HepG2 (cell line): ENCODE measurements at regions of chr4 and their contacts with region 1.

Region 1: GRCh38 chr4:13654158-13654797 is 26.8 kb upstream of the BOD1L1 start:
- DNase-seq: peak; percentile 32
- ATAC-seq: peak; percentile 98
- H3K4me3 ChIP-seq: peak overlapping the region; percentile 33 to 75 (median 47)
- H3K27ac ChIP-seq: no peak overlapping the region
- H3K4me1 ChIP-seq: no peaks in the 10 kb centered on the region
- H3K27me3 ChIP-seq: peaks cover 0 to 3% of the 10 kb centered on the region in 2 experiments; a peak in 2 of 5 replicates
- CTCF ChIP-seq: peak; percentile 74
- EP300 ChIP-seq: no peak
- POLR2A ChIP-seq: no peak
- RAD21 ChIP-seq: peak; percentile 46; the same call in 1 of the 2 replicates

Region 2: GRCh38 chr4:13207226-13207625 is 447.1 kb before region 1 on chr4:
- CTCF ChIA-PET with region 1: no interaction called
- POLR2A ChIA-PET with region 1: no interaction called
- in situ Hi-C with region 1: no loop called
- intact Hi-C with region 1: no loop called
- DNase-seq: no peak
- ATAC-seq: peak; percentile 40; the same call in 1 of the 3 replicates
- H3K4me3 ChIP-seq: no peak overlapping the region
- H3K27ac ChIP-seq: no peak overlapping the region
- H3K4me1 ChIP-seq: 0 out of 2 replicates have a peak, but pooled peaks cover 6% of the 10 kb centered on the region
- H3K27me3 ChIP-seq: no peaks in the 10 kb centered on the region
- CTCF ChIP-seq: no peak
- EP300 ChIP-seq: no peak
- POLR2A ChIP-seq: no peak
- RAD21 ChIP-seq: no peak

Region 3: DNA sequence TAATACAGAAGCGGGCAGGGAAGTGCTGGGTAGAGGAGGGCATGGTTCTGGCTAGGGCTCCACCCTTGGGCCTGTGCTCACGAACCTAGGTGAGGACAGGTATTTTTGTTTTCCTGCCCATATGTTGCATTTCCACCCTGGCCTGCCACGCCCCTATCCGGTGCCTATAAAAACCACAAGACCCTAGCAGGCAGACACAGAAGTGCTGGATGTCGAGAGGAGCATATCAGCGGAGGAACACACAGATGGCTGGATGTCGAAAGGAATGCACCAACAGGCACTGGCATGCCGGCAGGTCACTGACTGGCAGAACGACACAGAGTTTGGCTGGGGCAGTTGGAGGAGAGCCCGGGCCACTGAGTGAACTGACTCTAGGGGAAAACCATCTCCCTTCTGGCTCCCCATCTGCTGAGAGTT is 289.8 kb after region 1 on chr4:
- CTCF ChIA-PET with region 1: no interaction called
- POLR2A ChIA-PET with region 1: no interaction called
- in situ Hi-C with region 1: no loop called
- intact Hi-C with region 1: loop called (anchors 10 kb)
- DNase-seq: no peak
- ATAC-seq: no peak
- H3K4me3 ChIP-seq: no peak overlapping the region
- H3K27ac ChIP-seq: no peak overlapping the region
- H3K4me1 ChIP-seq: no peaks in the 10 kb centered on the region
- H3K27me3 ChIP-seq: no peaks in the 10 kb centered on the region
- CTCF ChIP-seq: no peak
- EP300 ChIP-seq: no peak
- POLR2A ChIP-seq: no peak
- RAD21 ChIP-seq: no peak

Region 4: DNA sequence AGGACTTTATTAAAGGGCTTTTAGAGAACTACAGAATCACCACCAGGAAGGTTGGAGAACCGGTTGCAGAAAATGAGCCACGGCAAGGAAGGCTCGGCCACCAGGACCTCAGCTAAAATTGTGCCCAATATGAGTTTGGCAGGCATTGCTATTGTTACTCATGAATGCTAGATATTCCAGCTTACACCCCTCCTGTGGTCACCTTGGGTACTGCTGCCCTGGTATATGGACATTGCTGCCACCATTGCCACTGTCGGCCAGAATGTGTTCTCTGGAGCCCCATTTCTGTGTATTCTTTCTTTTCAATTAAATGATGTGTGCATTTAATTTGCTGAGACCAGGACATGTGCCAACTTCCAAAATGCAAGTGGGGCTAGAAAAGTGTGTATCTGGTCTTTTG is 600.0 kb after region 1 on chr4:
- CTCF ChIA-PET with region 1: no interaction called
- POLR2A ChIA-PET with region 1: no interaction called
- in situ Hi-C with region 1: no loop called
- intact Hi-C with region 1: loop called (anchors 2 kb)
- DNase-seq: no peak
- ATAC-seq: peak; percentile 83
- H3K4me3 ChIP-seq: no peak overlapping the region
- H3K27ac ChIP-seq: no peak overlapping the region
- H3K4me1 ChIP-seq: no peaks in the 10 kb centered on the region
- H3K27me3 ChIP-seq: no peaks in the 10 kb centered on the region
- CTCF ChIP-seq: no peak; the same call in 1 of the 2 replicates
- EP300 ChIP-seq: no peak
- POLR2A ChIP-seq: no peak
- RAD21 ChIP-seq: no peak

Region 5: GRCh38 chr4:15001869-15002658 is 1347.8 kb after region 1 on chr4 and contains the start of gene CPEB2:
- CTCF ChIA-PET with region 1: no interaction called
- POLR2A ChIA-PET with region 1: no interaction called
- in situ Hi-C with region 1: loop called (anchors 25 kb)
- intact Hi-C with region 1: loop called (anchors 10 kb)
- DNase-seq: peak; percentile 86
- ATAC-seq: peak; percentile 84
- H3K4me3 ChIP-seq: peak within 1 kb of the TSS; percentile 81 to 97 (median 97)
- H3K27ac ChIP-seq: peak within 1 kb of the TSS; percentile 97
- H3K4me1 ChIP-seq: peaks cover 13% of the 10 kb centered on the region
- H3K27me3 ChIP-seq: no peaks in the 10 kb centered on the region; a peak in 2 of 5 replicates
- CTCF ChIP-seq: 0 out of 2 replicates have a peak, but pooled peaks have one; percentile 1
- EP300 ChIP-seq: 0 out of 4 replicates have a peak, but pooled peaks of 1 of the 2 experiments have one; percentile 6
- POLR2A ChIP-seq: peak in 1 of 2 experiments; percentile 85; a peak in 2 of 4 replicates
- RAD21 ChIP-seq: peak; percentile 16
- total RNA-seq, gene CPEB2: 2.5 and 3.7 TPM in 2 replicates

Region 6: GRCh38 chr4:15197005-15197404 is 1542.7 kb after region 1 on chr4:
- CTCF ChIA-PET with region 1: no interaction called
- POLR2A ChIA-PET with region 1: no interaction called
- in situ Hi-C with region 1: no loop called
- intact Hi-C with region 1: loop called (anchors 10 kb)
- DNase-seq: peak; percentile 23
- ATAC-seq: peak; percentile 82
- H3K4me3 ChIP-seq: no peak overlapping the region
- H3K27ac ChIP-seq: no peak overlapping the region
- H3K4me1 ChIP-seq: no peaks in the 10 kb centered on the region
- H3K27me3 ChIP-seq: no peaks in the 10 kb centered on the region
- CTCF ChIP-seq: peak; percentile 54
- EP300 ChIP-seq: no peak
- POLR2A ChIP-seq: no peak
- RAD21 ChIP-seq: no peak